ENCODE measurements at regions of chr10 and their contacts with region 1.

Region 1: GRCh38 chr10:62437696-62438095 is 63.5 kb downstream of the ZNF365 start:
- DNase-seq: no peak
- ATAC-seq: peak; percentile 50

Region 2: GRCh38 chr10:62647375-62648092 is 209.8 kb after region 1 on chr10:
- intact Hi-C with region 1: no loop called
- DNase-seq: no peak
- ATAC-seq: no peak

Region 3: DNA sequence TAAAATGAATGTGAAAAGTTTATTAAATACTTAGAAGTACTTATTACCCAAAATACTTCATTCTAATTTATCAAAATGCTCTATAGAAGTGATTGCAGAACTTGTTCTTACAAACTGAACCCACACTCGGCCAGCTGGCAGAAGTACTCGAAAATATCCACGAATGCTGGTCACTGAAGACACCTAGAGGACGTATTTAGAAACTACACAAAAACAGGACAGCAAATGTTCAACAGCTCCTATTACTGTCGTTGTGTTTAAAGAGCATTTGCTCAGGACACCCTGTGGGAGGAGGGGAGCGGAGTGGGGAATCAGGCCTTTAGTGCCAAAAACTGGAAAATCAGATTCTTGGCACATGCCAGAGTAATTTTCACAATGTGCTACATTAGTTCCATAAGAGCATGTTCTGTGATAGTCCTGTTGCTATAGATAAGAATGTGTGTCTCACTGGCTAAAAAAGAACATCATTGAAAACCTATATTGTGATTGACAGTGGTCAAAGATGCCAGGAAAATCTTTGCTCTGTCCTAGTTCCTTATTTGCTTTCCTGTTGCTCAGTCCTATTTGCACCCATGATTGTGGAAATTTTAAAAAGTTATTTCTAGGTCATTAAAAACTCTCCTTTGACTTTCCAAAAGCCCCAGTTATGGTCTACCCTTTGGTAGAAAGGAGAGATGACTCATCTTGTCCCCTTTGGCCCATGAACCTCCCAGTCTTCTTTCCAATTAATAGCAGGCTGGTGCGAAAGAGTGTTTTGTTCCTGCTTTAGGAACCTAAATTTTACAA is 646.4 kb after region 1 on chr10:
- intact Hi-C with region 1: loop called in 1 of 2 experiments (anchors 10 kb)
- DNase-seq: peak; percentile 34 to 40
- ATAC-seq: peak; percentile 70

Region 4: DNA sequence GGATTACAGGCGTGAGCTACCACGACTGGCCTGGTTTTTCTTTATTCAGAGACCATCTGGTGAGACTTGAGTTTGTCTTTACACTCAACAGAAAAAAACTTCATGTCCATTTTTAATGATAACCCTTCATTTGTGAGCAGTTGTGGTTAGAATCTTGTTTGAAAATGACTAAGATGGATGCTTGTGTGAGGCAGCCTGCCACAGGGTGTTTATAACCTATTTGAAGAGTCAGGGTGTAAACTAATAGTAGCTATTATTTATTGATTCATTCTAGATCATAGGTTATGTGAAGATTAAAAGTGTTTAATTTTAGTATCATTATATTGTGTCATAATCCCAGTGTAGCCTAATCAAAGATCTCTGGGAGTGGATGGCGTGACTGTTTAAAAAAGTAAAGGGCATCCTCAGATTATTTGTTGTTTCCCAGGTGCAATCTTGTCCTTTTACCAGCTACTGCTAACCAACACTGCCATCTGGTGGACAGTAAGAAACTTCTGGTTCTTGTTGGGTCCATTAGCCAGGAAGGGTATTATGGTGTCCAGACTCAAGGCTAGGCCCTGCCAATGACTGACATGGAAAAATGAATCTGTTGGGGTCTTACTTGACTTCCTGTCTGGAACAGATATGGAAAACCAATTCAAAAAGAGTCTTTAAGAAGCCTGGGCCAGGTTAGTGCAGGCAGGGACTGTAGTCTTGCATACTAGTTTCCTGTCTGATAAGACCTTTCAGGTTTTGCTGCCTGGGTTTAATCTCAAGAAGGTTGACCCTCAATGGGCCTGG is 720.3 kb after region 1 on chr10:
- intact Hi-C with region 1: loop called in 1 of 2 experiments (anchors 5 kb)
- DNase-seq: no peak
- ATAC-seq: peak; percentile 49